H1 (cell line): ENCODE measurements at regions of chr9 and their contacts with region 1.

Region 1: DNA sequence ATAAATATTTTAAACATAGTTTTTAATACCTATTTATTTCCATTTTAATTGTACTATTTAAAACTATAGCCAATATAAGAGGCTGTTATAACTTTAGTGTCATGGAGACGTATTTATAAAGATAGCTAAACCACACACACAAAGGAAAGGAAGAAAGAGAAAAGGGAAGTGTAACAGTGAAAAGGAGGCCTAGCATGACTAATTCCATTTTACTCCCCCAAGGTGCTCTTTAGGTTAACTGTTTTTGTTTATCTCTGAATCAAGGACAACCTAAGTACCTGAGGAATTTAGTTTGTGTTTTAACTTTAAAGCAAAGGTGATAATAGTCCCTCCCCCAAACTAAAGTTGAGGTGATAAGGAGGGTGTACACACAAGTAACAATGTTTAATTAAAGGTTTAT is 1188.9 kb upstream of the C9orf72 start:
- DNase-seq: no peak
- H3K4me3 ChIP-seq: no peak overlapping the region
- H3K27ac ChIP-seq: 0 out of 2 replicates have a peak overlapping the region, but pooled peaks have one; percentile 27
- H3K4me1 ChIP-seq: peaks cover 0 to 7% (median 1%) of the 10 kb centered on the region in 4 experiments; a peak in 3 of 7 replicates
- H3K27me3 ChIP-seq: no peaks in the 10 kb centered on the region
- CTCF ChIP-seq: no peak
- EP300 ChIP-seq: no peak
- POLR2A ChIP-seq: no peak
- RAD21 ChIP-seq: no peak

Region 2: DNA sequence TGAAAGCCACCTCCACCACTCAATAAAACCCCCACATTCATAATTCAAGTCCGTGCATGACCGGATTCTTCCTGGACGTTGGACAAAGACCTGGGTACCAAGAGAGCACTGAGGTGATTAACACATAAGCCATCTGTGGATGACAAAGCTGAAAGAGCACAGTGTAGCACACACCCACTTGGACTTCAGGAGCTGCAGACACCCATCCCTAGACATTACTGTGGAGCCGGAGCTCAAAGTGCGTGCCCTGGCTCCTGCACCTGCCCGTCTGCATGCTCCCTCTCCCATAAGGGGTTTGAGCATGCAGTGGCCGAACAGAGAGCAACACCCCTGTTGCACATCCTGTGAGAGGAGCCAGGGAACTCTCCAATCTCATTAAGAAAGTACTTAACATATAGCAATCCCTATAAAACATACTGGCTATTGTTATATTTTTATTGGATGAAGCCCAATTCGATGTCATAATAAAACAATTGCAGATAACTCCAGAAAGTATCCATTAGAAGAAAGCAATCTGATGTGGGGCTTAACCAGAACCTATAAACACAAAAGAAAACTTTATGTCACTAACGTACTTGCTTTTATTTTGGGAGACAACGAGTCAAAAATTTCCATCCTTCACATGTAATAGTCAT is 14.7 kb before region 1 on chr9:
- CTCF ChIA-PET with region 1: no interaction called
- POLR2A ChIA-PET with region 1: no interaction called
- DNase-seq: no peak
- H3K4me3 ChIP-seq: no peak overlapping the region
- H3K27ac ChIP-seq: no peak overlapping the region
- H3K4me1 ChIP-seq: no peaks in the 10 kb centered on the region
- H3K27me3 ChIP-seq: no peaks in the 10 kb centered on the region
- CTCF ChIP-seq: no peak
- EP300 ChIP-seq: no peak
- POLR2A ChIP-seq: no peak
- RAD21 ChIP-seq: no peak

Region 3: DNA sequence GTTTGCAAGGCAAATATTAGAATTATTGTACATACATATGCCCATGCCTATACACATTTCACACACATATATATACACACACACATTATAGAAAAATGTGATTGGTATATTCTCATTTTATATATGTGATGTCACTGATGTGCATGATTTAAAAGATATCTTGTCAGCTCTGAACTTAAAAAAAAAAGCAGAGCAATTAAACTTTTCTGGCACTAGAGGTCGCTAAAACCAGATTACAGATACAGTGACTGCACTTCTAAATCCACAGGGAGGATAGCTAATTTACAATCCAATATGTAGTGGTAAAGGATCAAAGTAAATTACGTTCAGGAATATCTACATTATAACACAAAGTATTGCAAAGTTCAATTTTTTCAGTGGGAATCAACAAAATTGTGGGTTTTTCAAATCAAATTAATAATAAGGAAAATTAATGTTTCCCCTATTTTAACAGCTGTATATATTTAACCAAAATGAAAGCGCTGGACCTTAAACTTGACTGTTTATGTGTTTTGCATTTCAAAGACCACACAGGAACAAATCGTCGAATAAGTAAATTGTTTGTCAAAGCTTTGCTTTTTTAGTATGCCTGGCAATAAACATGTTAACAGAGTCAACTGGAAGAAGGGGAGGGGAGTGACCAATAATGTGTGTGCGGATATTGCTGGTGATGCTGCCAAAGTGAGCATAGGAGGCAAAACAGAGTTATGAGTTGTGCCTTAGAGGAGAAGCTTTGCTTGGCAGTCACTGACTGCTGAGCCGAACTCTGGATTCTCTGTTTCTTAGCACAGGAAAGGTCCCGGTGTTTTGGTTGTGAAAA is 12.5 kb after region 1 on chr9:
- CTCF ChIA-PET with region 1: interaction called, 20 read pairs
- POLR2A ChIA-PET with region 1: no interaction called
- DNase-seq: no peak
- H3K4me3 ChIP-seq: no peak overlapping the region
- H3K27ac ChIP-seq: no peak overlapping the region
- H3K4me1 ChIP-seq: peaks cover 0 to 5% (median 3%) of the 10 kb centered on the region in 4 experiments; a peak in 3 of 7 replicates
- H3K27me3 ChIP-seq: no peaks in the 10 kb centered on the region
- CTCF ChIP-seq: peak in 2 of 3 experiments; percentile 36 to 54; a peak in 2 of 4 replicates
- EP300 ChIP-seq: no peak
- POLR2A ChIP-seq: no peak
- RAD21 ChIP-seq: peak; percentile 64 to 65